ENCODE measurements at regions of chr6 and their contacts with region 1.

Region 1: GRCh38 chr6:25006565-25007001 is 70.8 kb upstream of the RIPOR2 start:
- DNase-seq: peak; percentile 85
- ATAC-seq: peak; percentile 79
- H3K4me3 Mint-ChIP-seq: peak overlapping the region; percentile 38
- H3K27ac Mint-ChIP-seq: peak overlapping the region; percentile 96
- H3K4me1 Mint-ChIP-seq: peaks cover 66% of the 10 kb centered on the region
- H3K27me3 Mint-ChIP-seq: no peaks in the 10 kb centered on the region

Region 2: GRCh38 chr6:24855395-24856245 is 151.0 kb before region 1 on chr6:
- CTCF ChIA-PET with region 1: interaction called, 119 read pairs
- DNase-seq: peak; percentile 78
- ATAC-seq: peak; percentile 60
- H3K4me3 Mint-ChIP-seq: no peak overlapping the region
- H3K27ac Mint-ChIP-seq: peak overlapping the region; percentile 88
- H3K4me1 Mint-ChIP-seq: peaks cover 52% of the 10 kb centered on the region
- H3K27me3 Mint-ChIP-seq: no peaks in the 10 kb centered on the region